Gastrocnemius medialis (tissue), 4 donors: ENCODE measurements at regions of chr12 and their contacts with region 1.

Region 1: GRCh38 chr12:122137681-122138080 is 36.3 kb downstream of the IL31 start:
- DNase-seq: no peak
- ATAC-seq: no peak
- H3K4me3 ChIP-seq: no peak overlapping the region
- H3K27ac ChIP-seq: peak overlapping the region in 3 of 4 donors; percentile 88 to 93 (median 91)
- H3K4me1 ChIP-seq: peaks cover 22 to 25% of the 10 kb centered on the region in 2 donors
- H3K27me3 ChIP-seq: no peaks in the 10 kb centered on the region
- CTCF ChIP-seq: no peak
- POLR2A ChIP-seq: no peak

Region 2: GRCh38 chr12:122031342-122032216 is 106.1 kb before region 1 on chr12:
- in situ Hi-C with region 1: no loop called
- intact Hi-C with region 1: no loop called
- DNase-seq: no peak
- ATAC-seq: peak; percentile 34 to 40
- H3K4me3 ChIP-seq: no peak overlapping the region
- H3K27ac ChIP-seq: no peak overlapping the region
- H3K4me1 ChIP-seq: peaks cover 23 to 46% of the 10 kb centered on the region in 2 donors
- H3K27me3 ChIP-seq: no peaks in the 10 kb centered on the region
- CTCF ChIP-seq: peak; percentile 57 to 79 (median 75)
- POLR2A ChIP-seq: no peak

Region 3: DNA sequence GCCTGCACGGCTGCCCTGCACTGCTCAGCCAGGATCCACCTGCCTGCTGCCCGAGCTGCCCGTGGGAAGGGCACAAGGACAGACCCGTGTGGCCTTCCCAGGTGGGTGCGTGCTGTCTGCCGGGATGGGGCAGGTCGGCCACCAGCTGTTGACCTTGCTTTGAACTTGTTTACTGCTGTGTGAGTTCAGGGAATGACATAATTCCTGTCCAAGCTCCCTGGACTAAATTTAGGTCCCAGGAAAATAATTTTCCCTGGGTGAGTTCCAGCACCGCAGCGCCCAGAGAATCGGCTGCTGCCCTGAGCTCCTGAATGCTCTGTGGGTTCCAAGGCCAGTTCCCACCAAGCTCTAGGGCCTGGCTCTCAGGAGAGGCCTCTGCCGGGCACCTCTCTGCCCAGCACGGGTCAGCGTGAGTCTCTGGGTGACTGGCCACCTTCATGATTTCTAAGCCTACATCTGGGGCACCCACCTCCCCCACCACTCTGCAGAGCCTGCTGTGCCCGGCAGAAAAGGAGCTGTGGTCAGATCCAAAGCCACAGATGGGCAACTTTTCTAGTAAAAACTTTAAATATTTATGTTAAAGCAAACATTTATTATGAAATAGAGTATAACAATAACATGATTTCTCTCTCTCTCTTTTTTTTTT is 86.3 kb before region 1 on chr12:
- in situ Hi-C with region 1: no loop called
- intact Hi-C with region 1: no loop called
- DNase-seq: peak; percentile 85 to 89
- ATAC-seq: peak; percentile 87 to 89
- H3K4me3 ChIP-seq: peak overlapping the region in 2 of 4 donors; percentile 13 to 36
- H3K27ac ChIP-seq: peak overlapping the region; percentile 77 to 95 (median 92)
- H3K4me1 ChIP-seq: peaks cover 32 to 38% of the 10 kb centered on the region in 2 donors
- H3K27me3 ChIP-seq: no peaks in the 10 kb centered on the region
- CTCF ChIP-seq: no peak
- POLR2A ChIP-seq: peak in 1 of 2 donors; percentile 22

Region 4: GRCh38 chr12:122182887-122183585 is 45.4 kb after region 1 on chr12 and contains the start of gene LRRC43:
- in situ Hi-C with region 1: no loop called
- intact Hi-C with region 1: loop called (anchors 5 kb)
- DNase-seq: no peak
- ATAC-seq: peak; percentile 26 to 30
- H3K4me3 ChIP-seq: peak within 1 kb of the TSS; percentile 39 to 64 (median 53)
- H3K27ac ChIP-seq: no peak within 1 kb of the TSS
- H3K4me1 ChIP-seq: no peaks in the 10 kb centered on the region
- H3K27me3 ChIP-seq: peaks cover 0 to 10% (median 0%) of the 10 kb centered on the region in 3 donors
- CTCF ChIP-seq: no peak
- POLR2A ChIP-seq: no peak
- total RNA-seq, gene LRRC43: not detected

Region 5: DNA sequence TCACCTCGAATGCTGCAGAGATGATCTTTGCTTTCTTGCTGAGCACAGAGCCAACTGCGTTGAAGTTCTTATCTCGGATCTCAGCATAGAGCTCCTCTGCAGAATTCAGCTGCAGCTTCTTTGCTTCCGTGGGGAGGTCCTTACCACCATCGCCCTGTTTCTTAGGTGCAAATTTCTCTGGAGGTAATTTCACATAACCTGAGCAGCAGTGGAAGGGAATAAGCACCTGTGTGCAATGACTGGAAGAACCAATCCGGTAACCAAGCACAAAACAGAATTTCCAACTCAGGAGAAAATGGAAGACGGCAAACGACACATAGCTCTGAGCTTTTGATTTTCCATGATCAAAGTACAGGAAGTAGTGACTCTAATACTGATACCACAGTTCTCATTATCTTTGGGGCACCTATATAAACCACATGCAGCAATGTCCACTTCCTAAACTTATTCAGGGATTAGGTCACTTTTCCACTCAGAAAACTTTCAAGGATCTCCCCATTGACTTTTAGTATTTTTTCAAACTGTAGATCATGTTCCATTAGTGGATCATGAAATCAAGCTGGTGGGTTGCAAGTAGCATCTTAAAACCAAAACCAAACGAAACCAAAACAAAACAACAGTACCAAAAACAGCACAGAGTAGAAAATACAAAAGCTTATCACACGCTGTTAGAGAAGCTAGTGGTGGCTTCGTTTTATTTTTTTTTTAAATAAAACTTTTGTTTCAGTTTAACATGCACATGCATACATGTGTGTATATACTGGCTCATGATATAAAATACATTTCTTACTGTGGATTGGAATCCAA is 107.1 kb after region 1 on chr12:
- in situ Hi-C with region 1: no loop called
- intact Hi-C with region 1: no loop called
- DNase-seq: no peak
- ATAC-seq: no peak
- H3K4me3 ChIP-seq: no peak overlapping the region
- H3K27ac ChIP-seq: no peak overlapping the region
- H3K4me1 ChIP-seq: peaks cover 0 to under 1% of the 10 kb centered on the region in 2 donors
- H3K27me3 ChIP-seq: no peaks in the 10 kb centered on the region
- CTCF ChIP-seq: no peak
- POLR2A ChIP-seq: no peak

Region 6: GRCh38 chr12:122350141-122350848 is 212.6 kb after region 1 on chr12:
- in situ Hi-C with region 1: no loop called
- intact Hi-C with region 1: no loop called
- DNase-seq: no peak
- ATAC-seq: no peak
- H3K4me3 ChIP-seq: no peak overlapping the region
- H3K27ac ChIP-seq: peak overlapping the region; percentile 29 to 62 (median 44)
- H3K4me1 ChIP-seq: peaks cover 3 to 11% of the 10 kb centered on the region in 2 donors
- H3K27me3 ChIP-seq: no peaks in the 10 kb centered on the region
- CTCF ChIP-seq: peak in 1 of 5 experiments; percentile 7
- POLR2A ChIP-seq: no peak